GM13977 (cell line): ENCODE measurements at regions of chr14 and their contacts with region 1.

Region 1: DNA sequence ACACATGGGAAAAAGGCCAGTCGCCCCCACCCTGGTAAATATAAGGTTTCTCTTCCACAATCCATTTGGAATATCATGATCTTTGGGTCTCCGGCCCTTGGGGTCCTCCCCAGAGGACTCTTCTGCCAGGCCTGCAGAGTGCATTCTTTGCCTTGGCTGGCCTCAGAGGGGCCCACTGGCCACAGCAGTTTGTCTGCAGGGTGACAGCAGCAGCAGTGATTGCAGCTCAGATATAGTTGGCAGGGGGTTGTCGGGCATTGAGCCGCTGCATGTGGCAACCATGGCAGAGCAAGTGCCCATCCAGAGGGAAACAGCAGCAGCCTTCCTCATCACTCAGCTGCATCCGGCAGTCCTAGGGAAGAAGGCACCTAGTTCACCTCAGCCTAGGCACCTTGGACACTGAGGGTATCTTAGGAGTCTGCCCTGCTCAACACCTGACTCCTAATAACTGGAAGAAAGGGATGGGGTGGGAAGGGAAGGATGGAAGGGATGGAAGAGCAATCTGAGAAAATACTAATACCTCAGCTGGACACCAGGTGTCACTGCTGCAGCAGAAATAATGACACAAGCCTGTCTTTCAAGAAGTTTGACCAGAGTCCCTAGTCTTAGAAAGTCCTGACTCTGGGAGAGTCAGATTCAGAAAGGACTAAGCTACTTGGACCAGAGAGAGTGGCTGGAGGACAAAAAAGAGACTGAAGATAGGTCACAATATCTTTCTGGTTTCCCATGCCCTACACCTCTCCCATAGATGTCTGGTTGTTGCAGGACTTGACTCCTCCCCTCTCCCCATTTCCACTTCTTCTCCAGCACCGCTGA is 8.9 kb downstream of the AJUBA start:
- DNase-seq: peak; percentile 70
- CTCF ChIP-seq: peak; percentile 77

Region 2: GRCh38 chr14:23057757-23058653 is 84.6 kb after region 1 on chr14:
- in situ Hi-C with region 1: loop called (anchors 10 kb)
- DNase-seq: peak; percentile 95
- CTCF ChIP-seq: peak; percentile 93

Region 3: GRCh38 chr14:23154964-23155587 is 181.7 kb after region 1 on chr14:
- in situ Hi-C with region 1: no loop called
- DNase-seq: no peak
- CTCF ChIP-seq: no peak